Activated CD4-positive, alpha-beta memory T cell treated with anti-CD3 and anti-CD28 coated beads for 36 hours (primary cell): ENCODE measurements at regions of chr6 and their contacts with region 1.

Region 1: DNA sequence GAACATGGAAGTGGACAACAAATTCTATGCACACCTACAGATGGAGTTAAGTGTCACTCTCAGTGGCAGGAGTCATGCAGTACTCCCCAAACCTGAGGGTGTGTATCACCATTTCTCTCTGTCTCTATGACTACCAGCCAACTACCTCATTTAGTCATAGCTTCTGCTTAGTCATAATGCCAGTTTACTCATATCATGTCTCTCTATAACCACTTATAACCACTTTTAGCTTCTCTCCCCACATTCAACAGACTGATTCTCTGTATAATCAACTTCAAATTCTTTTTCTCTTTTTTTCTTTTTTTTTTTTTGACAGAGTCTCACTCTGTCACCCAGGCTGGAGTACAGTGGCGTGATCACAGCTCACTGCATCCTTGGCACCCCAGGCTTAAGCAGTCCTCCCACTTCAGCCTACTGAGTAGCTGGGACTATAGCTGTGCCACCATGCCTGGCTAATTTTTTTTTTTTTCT is 13.8 kb upstream of the GTF3C6 start:
- DNase-seq: peak; percentile 71
- H3K4me3 Mint-ChIP-seq: peak overlapping the region; percentile 16
- H3K27ac Mint-ChIP-seq: peak overlapping the region; percentile 71
- H3K4me1 Mint-ChIP-seq: peaks cover 10% of the 10 kb centered on the region
- H3K27me3 Mint-ChIP-seq: no peaks in the 10 kb centered on the region

Region 2: DNA sequence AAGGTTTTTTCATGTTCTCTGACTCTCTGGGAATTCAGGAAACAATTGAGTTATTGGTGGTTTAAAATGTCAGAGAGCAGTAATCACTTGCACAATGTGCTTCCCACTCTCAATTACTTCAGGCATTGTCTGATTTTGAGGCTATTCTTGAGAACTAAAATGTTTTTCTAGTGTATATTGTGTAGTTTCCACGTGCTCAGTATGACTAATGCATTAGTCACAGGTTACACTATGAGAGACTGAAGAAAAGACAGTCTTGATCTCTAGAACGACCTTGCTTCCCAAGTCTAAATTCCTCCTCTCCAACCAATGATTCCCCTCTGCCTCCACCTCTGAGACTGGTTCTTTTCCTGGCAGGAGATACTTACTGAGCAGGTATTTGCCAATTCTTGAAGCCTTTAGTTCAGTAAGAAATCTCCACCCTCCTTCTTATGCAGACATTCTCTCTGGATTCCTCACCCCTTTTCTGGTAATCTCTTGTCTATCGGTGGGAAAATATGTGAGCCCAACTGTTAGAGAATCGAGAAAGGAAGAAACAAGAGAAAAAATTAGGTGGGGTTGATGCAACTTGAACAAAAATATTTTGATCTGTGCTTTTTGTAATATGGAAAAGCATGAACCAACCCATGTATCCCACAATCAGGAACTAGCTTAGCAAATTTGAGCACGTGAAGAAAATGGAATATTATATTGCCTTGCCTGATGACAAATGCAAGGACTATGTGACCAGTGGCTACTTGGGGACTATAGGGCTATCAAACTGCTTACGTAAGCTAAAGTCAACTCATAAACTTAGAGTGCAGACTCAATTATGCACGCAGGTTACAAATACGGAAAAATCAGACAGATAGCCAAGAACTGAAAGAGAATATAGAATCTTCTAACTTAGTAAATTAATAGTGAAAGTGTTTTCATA is 407.2 kb before region 1 on chr6:
- CTCF ChIA-PET with region 1: interaction called, 5 read pairs
- POLR2A ChIA-PET with region 1: interaction called, 3 read pairs
- intact Hi-C with region 1: loop called (anchors 1 kb)
- DNase-seq: no peak
- H3K4me3 Mint-ChIP-seq: no peak overlapping the region
- H3K27ac Mint-ChIP-seq: peak overlapping the region; percentile 15
- H3K4me1 Mint-ChIP-seq: peaks cover 41% of the 10 kb centered on the region
- H3K27me3 Mint-ChIP-seq: no peaks in the 10 kb centered on the region

Region 3: GRCh38 chr6:110958329-110959192 is 13.8 kb after region 1 on chr6 and contains the start of gene GTF3C6:
- CTCF ChIA-PET with region 1: interaction called, 4 read pairs
- POLR2A ChIA-PET with region 1: interaction called, 16 read pairs
- intact Hi-C with region 1: loop called (anchors 1 kb)
- DNase-seq: peak; percentile 95
- H3K4me3 Mint-ChIP-seq: peak within 1 kb of the TSS; percentile 97
- H3K27ac Mint-ChIP-seq: peak within 1 kb of the TSS; percentile 98
- H3K4me1 Mint-ChIP-seq: peaks cover 15% of the 10 kb centered on the region
- H3K27me3 Mint-ChIP-seq: peaks cover 1% of the 10 kb centered on the region
- total RNA-seq, gene GTF3C6: 97.1 to 97.7 TPM

Region 4: DNA sequence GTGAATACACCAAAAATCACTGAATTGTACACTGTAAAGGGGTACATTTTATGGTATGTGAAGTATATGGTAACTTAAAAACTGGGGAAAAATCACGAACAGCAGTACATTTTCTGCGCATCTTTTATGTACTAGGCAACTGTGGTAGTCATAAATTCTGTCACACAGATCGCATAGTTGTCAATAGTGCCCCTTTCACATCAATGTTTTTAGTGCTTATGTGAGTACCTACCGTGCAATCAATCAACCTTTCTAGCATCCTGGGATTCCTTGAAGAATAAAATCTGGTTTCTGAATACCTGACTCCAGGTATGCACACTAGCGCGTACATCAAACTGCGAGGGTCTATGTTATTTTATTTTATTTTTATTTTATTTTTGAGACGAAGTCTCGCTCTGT is 36.5 kb after region 1 on chr6:
- CTCF ChIA-PET with region 1: interaction called, 3 read pairs
- POLR2A ChIA-PET with region 1: no interaction called
- intact Hi-C with region 1: loop called (anchors 5 kb)
- DNase-seq: no peak
- H3K4me3 Mint-ChIP-seq: peak overlapping the region; percentile 98
- H3K27ac Mint-ChIP-seq: peak overlapping the region; percentile 97
- H3K4me1 Mint-ChIP-seq: peaks cover 50% of the 10 kb centered on the region
- H3K27me3 Mint-ChIP-seq: no peaks in the 10 kb centered on the region

Region 5: DNA sequence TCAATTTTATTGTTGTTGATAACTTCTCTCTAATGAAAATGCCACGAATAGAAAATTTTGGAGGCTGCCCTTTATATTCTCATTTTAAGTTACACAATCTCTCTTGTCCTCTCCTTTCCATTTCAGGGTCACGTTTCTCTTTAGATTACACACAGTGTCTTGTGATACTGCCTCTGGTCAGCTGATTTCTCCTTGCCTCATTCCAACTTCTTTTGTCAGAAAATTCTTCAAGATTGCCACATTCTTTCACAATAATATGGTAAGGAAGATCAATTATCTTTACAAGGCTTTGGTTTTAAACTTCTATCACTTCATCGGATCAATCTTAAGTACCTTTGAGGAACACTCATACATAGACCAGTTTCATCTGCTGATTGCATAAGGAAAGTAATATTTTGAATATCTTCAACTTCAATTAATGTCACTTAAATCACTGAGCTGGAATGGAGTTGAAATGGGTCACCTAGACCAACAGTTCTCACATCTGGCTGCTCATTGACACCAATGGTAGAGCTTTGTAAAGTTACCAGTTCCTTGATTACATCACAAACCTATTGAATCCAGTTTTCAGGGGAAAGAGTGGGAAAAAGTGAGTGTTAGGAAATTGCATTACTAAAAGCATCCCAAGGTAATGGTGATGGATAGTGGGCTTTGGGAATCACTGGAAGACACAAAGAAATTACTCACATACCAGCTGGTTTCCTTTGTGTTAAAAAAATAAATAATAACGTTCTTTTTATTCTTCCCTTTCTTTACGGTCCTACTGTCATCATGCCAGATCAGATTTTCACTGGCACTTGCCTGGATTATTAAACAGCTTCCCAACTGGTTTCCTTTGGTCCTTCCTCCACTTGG is 1772.9 kb after region 1 on chr6:
- CTCF ChIA-PET with region 1: no interaction called
- POLR2A ChIA-PET with region 1: no interaction called
- intact Hi-C with region 1: no loop called
- DNase-seq: no peak
- H3K4me3 Mint-ChIP-seq: no peak overlapping the region
- H3K27ac Mint-ChIP-seq: no peak overlapping the region
- H3K4me1 Mint-ChIP-seq: no peaks in the 10 kb centered on the region
- H3K27me3 Mint-ChIP-seq: no peaks in the 10 kb centered on the region